Breast epithelium (tissue), 4 donors: ENCODE measurements at regions of chr7 and their contacts with region 1.

Region 1: GRCh38 chr7:20730611-20731010 is 56.1 kb downstream of the SP8 start:
- DNase-seq: no peak
- H3K4me3 ChIP-seq: no peak overlapping the region
- H3K27ac ChIP-seq: no peak overlapping the region
- H3K4me1 ChIP-seq: no peaks in the 10 kb centered on the region
- H3K27me3 ChIP-seq: no peaks in the 10 kb centered on the region
- CTCF ChIP-seq: no peak
- POLR2A ChIP-seq: no peak

Region 2: GRCh38 chr7:20964281-20964918 is 233.8 kb after region 1 on chr7:
- intact Hi-C with region 1: no loop called
- DNase-seq: no peak
- H3K4me3 ChIP-seq: no peak overlapping the region
- H3K27ac ChIP-seq: no peak overlapping the region
- H3K4me1 ChIP-seq: no peaks in the 10 kb centered on the region
- H3K27me3 ChIP-seq: no peaks in the 10 kb centered on the region
- CTCF ChIP-seq: no peak
- POLR2A ChIP-seq: no peak

Region 3: DNA sequence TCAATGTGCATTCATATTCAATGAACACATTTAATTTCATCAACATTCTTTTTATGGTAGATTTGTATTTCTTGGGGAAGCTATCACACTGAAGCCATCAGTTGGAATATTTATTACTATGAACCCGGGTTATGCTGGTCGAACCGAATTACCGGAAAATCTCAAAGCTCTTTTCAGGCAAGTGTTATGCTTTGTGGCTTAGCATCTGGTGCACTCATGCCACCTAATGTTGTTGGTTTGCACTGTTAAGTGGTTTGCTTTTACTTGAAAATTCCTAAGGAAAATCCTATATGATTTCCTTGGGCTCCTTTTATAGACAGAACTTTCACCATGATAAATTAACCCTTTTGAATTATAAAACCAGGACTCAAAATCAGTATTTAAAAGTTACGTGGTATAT is 960.1 kb after region 1 on chr7:
- intact Hi-C with region 1: loop called (anchors 5 kb)
- DNase-seq: no peak
- H3K4me3 ChIP-seq: no peak overlapping the region
- H3K27ac ChIP-seq: no peak overlapping the region
- H3K4me1 ChIP-seq: no peaks in the 10 kb centered on the region
- H3K27me3 ChIP-seq: no peaks in the 10 kb centered on the region
- CTCF ChIP-seq: no peak
- POLR2A ChIP-seq: no peak